ENCODE measurements at regions of chr6 and their contacts with region 1.

Region 1: DNA sequence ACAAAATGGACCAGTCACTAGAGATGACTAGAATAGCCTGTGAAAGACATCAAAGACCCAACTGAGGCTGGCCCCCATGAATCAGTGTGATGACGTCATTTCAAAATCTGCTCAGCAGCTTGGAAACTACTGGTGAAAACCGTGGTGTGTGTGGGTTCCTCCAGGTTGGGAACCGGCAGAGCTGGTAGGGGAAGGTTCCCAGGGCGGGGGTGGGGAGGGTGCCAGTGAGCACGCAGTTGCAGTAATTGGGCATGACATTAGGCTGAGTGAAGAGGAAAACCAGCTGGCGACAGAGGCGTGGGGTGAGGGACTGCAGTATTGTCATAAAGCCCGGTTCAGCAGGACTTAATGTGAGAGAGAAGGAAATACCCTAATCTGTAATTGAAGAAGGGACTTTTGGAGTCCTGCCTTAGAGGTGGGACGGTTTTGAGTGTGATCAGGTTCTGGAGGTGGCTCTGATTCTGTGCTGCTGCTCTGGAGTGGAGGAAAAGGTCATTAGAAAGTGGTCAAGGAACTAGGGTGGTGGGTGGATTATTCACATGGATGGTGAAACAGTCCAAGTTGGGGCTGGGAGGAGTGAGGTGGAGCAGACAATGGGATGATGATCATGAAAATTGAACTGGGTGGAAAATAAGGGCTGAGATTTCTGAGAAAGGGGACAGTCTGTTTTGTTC is 52.0 kb upstream of the MTHFD1L start:
- DNase-seq: no peak
- ATAC-seq: no peak
- H3K4me3 ChIP-seq: no peak overlapping the region
- H3K27ac ChIP-seq: no peak overlapping the region
- H3K4me1 ChIP-seq: no peaks in the 10 kb centered on the region
- H3K27me3 ChIP-seq: 0 out of 5 replicates have a peak, but pooled peaks cover 0 to 5% of the 10 kb centered on the region in 2 experiments
- CTCF ChIP-seq: no peak
- EP300 ChIP-seq: no peak
- POLR2A ChIP-seq: no peak
- RAD21 ChIP-seq: no peak

Region 2: DNA sequence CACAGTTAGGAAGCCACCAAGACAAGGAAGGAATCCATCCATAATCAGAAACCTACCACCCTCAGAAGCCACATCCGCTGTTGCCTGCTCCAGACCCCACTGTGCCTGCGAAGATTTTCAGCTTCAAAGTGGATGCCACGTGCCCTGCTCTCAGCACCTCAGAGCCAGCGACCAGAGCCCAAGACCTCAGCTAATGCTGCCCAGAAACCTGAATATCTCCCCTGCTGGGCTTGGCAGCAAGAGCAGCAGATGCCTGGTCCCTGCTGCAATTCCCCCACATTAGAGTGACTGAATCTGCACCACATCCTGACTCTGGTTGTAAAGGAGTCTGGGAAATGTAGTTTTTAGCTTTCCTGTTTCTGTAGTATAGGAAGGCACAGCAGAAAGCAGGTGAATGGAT is 733.9 kb before region 1 on chr6:
- CTCF ChIA-PET with region 1: interaction called, 16 read pairs
- POLR2A ChIA-PET with region 1: no interaction called
- in situ Hi-C with region 1: loop called (anchors 10 kb)
- intact Hi-C with region 1: loop called (anchors 1 kb)
- DNase-seq: no peak
- ATAC-seq: no peak
- H3K4me3 ChIP-seq: no peak overlapping the region
- H3K27ac ChIP-seq: no peak overlapping the region
- H3K4me1 ChIP-seq: no peaks in the 10 kb centered on the region
- H3K27me3 ChIP-seq: peaks cover 0 to 9% of the 10 kb centered on the region in 2 experiments; a peak in 1 of 5 replicates
- CTCF ChIP-seq: no peak
- EP300 ChIP-seq: no peak
- POLR2A ChIP-seq: no peak
- RAD21 ChIP-seq: no peak

Region 3: DNA sequence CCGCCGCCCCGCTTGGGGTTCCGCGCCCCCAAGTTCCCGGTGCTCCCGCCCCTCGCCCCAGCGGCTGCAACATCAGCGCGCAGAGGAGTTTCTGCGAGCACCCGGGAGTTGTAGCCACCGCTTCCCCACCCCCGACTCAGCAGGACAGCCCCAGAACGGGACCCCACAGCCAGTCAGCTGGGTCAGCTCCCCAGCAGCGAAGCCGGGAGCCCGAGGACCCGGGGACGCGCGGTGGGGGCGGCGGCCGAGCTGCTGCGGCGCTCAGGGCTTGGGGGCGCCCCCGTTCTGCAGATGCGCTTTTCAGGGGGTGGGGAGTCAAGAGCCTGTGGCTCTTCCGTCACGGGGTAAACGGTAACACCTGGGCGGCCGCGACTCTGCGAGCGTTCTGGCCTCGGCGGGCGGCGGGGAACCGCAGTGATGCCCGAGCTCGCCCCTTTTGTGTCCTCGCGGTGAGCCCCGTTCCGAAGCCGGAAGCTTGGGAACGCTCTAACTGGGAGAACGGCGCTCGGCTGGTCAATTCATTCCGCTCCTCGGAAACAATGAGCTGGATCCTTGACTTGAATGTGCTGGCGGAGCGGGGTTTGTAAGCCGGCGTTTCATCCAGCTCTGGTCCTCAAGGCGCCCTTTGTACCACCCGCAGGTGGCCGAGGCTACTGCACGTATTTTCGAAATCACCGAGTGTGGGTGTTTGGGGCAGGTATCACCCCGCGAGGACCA is 213.0 kb before region 1 on chr6:
- CTCF ChIA-PET with region 1: no interaction called
- POLR2A ChIA-PET with region 1: no interaction called
- in situ Hi-C with region 1: loop called (anchors 10 kb)
- intact Hi-C with region 1: loop called (anchors 2 kb)
- DNase-seq: peak; percentile 50
- ATAC-seq: peak; percentile 97
- H3K4me3 ChIP-seq: peak overlapping the region; percentile 29 to 68 (median 38); a peak in 4 of 6 replicates
- H3K27ac ChIP-seq: no peak overlapping the region
- H3K4me1 ChIP-seq: peaks cover 12% of the 10 kb centered on the region; the same call in 1 of the 2 replicates
- H3K27me3 ChIP-seq: peaks cover 1 to 45% of the 10 kb centered on the region in 2 experiments; a peak in 3 of 5 replicates
- CTCF ChIP-seq: peak; percentile 59
- EP300 ChIP-seq: no peak
- POLR2A ChIP-seq: no peak
- RAD21 ChIP-seq: peak; percentile 52

Region 4: DNA sequence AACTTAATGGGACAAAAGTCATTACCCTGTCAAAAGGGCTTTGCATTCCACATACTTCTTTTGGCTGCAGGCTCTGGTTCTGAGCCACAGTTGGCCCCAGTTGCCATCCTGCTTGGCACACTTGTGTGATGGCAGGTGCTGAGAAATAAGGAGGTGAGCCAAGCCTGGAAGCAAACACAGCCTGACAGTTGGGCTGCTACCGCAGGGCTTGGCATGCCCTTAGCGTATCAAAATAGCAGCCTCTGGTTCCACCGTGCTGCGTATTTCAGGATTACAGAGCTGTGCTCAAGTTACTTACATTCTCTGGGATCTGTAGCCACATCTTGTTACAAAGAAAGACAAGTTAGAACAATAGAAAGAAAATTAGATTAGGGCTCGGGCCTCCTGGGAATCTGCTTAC is 63.1 kb after region 1 on chr6:
- CTCF ChIA-PET with region 1: interaction called, 14 read pairs
- POLR2A ChIA-PET with region 1: no interaction called
- in situ Hi-C with region 1: loop called (anchors 5 kb)
- intact Hi-C with region 1: loop called (anchors 1 kb)
- DNase-seq: no peak
- ATAC-seq: no peak
- H3K4me3 ChIP-seq: no peak overlapping the region
- H3K27ac ChIP-seq: no peak overlapping the region
- H3K4me1 ChIP-seq: peaks cover 67% of the 10 kb centered on the region
- H3K27me3 ChIP-seq: no peaks in the 10 kb centered on the region
- CTCF ChIP-seq: no peak
- EP300 ChIP-seq: no peak
- POLR2A ChIP-seq: no peak
- RAD21 ChIP-seq: no peak

Measured in HepG2 (cell line).